Activated CD8-positive, alpha-beta memory T cell treated with anti-CD3 and anti-CD28 coated beads, Interleukin-2, amount 10 ng/mL, durations not matched to agents 7 days and 5 days (primary cell): ENCODE measurements at regions of chr19 and their contacts with region 1.

Region 1: GRCh38 chr19:6501740-6502648 is at the start of gene TUBB4A:
- DNase-seq: peak; percentile 65
- ATAC-seq: peak; percentile 76
- H3K4me3 Mint-ChIP-seq: peak within 1 kb of the TSS; percentile 73
- H3K27ac Mint-ChIP-seq: no peak within 1 kb of the TSS
- H3K4me1 Mint-ChIP-seq: peaks cover 32% of the 10 kb centered on the region
- H3K27me3 Mint-ChIP-seq: peaks cover 9% of the 10 kb centered on the region
- total RNA-seq, gene TUBB4A: 7.5 to 8.1 TPM

Region 2: GRCh38 chr19:6481541-6482342 is 20.3 kb before region 1 on chr19 and contains the start of gene DENND1C:
- CTCF ChIA-PET with region 1: interaction called, 23 read pairs
- DNase-seq: peak; percentile 90
- ATAC-seq: peak; percentile 93
- H3K4me3 Mint-ChIP-seq: peak within 1 kb of the TSS; percentile 97
- H3K27ac Mint-ChIP-seq: peak within 1 kb of the TSS; percentile 97
- H3K4me1 Mint-ChIP-seq: peaks cover 35% of the 10 kb centered on the region
- H3K27me3 Mint-ChIP-seq: no peaks in the 10 kb centered on the region
- total RNA-seq, gene DENND1C: 100 to 113 TPM

Region 3: DNA sequence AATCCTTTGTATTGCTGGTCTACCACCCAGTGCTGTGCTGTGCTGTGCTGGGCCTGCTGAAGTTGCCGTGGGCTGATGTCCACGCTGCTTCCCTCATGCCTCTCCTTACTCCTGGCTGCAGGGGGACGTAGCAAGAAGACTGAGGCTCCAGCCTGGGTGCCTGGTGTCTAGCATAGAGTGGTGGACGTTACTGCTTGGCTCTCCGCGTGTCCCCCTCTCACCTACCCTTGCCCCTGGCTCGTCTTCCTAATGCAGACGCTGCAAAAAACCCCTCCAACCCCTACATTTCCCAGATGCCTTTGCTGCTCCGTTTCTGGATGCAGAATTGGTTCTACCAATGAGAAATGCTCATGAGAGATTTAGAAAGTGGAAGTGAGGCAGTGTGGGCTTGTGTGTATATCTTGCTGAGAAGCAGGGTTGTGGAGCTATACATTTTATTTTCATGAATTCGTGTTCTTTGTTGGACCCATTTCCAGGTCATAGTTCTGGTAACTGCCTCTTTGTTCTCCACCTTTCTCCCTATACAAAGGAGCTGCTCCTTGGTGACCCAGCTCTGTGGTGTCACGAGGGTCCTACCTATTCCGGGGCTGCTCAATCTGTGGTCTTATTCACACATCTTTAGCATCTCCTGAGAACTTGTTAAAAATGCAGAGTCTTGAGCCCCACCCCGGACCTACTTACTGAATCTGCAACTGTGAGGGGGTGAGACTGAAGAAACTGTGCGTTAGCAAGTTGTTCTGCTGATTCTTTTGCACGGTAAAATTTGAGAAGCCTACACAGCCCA is 12.5 kb before region 1 on chr19:
- CTCF ChIA-PET with region 1: interaction called, 10 read pairs
- DNase-seq: peak; percentile 74
- ATAC-seq: peak; percentile 95
- H3K4me3 Mint-ChIP-seq: peak overlapping the region; percentile 82
- H3K27ac Mint-ChIP-seq: peak overlapping the region; percentile 85
- H3K4me1 Mint-ChIP-seq: peaks cover 18% of the 10 kb centered on the region
- H3K27me3 Mint-ChIP-seq: no peaks in the 10 kb centered on the region

Region 4: DNA sequence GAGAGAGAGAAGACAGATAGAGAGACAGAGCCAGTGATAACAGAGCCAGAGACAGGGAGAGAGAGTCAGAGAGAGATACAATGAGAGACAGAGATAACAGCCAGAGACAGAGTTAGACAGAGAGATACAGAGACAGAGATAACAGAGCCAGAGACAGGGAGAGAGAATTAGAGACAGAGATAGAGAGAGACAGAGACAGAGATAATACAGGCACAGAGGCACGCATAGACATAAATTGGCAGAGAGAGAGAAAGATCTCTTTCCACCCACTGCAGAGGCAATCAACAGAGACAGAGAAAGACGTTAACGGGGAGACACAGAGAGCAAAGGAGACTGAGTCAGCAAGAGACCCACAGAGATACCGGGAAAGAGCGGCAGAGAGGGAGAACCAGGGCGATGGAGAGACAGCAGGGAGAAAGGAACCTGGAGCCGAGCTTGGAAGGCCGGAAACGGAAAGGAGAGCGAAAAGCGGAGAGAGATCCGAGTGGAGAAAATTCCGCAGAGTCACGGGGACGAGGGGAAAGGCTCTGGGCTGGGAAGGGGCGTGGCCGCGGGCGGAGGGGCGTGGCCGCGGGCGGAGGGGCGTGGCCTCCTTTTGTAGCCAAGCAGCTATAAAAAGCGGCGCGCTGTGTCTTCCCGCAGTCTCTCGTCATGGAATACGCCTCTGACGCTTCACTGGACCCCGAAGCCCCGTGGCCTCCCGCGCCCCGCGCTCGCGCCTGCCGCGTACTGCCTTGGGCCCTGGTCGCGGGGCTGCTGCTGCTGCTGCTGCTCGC is 28.6 kb after region 1 on chr19 and contains the start of gene TNFSF9:
- CTCF ChIA-PET with region 1: no interaction called
- DNase-seq: peak; percentile 89
- ATAC-seq: peak; percentile 73
- H3K4me3 Mint-ChIP-seq: peak within 1 kb of the TSS; percentile 79
- H3K27ac Mint-ChIP-seq: peak within 1 kb of the TSS; percentile 73
- H3K4me1 Mint-ChIP-seq: peaks cover 36% of the 10 kb centered on the region
- H3K27me3 Mint-ChIP-seq: peaks cover 38% of the 10 kb centered on the region
- total RNA-seq, gene TNFSF9: 4.7 to 18.5 TPM